Heart left ventricle (tissue), 16 donors: ENCODE measurements at regions of chrX and their contacts with region 1.

Region 1: GRCh38 chrX:68249401-68249831 is 183.9 kb downstream of the OPHN1 start:
- DNase-seq: peak; percentile 30 to 64 (median 44)
- ATAC-seq: peak; percentile 83 to 93 (median 90)
- H3K4me3 ChIP-seq: no peak overlapping the region
- H3K27ac ChIP-seq: peak overlapping the region in 3 of 12 donors; percentile 0 to 17 (median 17)
- H3K4me1 ChIP-seq: peaks cover 0 to 14% (median 0%) of the 10 kb centered on the region in 12 donors
- H3K27me3 ChIP-seq: no peaks in the 10 kb centered on the region
- CTCF ChIP-seq: no peak
- POLR2A ChIP-seq: no peak

Region 2: GRCh38 chrX:68307769-68308168 is 58.4 kb after region 1 on chrX:
- intact Hi-C with region 1: no loop called
- DNase-seq: no peak
- ATAC-seq: peak in 1 of 4 donors; percentile 51
- H3K4me3 ChIP-seq: no peak overlapping the region
- H3K27ac ChIP-seq: no peak overlapping the region
- H3K4me1 ChIP-seq: no peaks in the 10 kb centered on the region
- H3K27me3 ChIP-seq: peaks cover 0 to 5% (median 0%) of the 10 kb centered on the region in 9 donors
- CTCF ChIP-seq: no peak
- POLR2A ChIP-seq: no peak

Region 3: DNA sequence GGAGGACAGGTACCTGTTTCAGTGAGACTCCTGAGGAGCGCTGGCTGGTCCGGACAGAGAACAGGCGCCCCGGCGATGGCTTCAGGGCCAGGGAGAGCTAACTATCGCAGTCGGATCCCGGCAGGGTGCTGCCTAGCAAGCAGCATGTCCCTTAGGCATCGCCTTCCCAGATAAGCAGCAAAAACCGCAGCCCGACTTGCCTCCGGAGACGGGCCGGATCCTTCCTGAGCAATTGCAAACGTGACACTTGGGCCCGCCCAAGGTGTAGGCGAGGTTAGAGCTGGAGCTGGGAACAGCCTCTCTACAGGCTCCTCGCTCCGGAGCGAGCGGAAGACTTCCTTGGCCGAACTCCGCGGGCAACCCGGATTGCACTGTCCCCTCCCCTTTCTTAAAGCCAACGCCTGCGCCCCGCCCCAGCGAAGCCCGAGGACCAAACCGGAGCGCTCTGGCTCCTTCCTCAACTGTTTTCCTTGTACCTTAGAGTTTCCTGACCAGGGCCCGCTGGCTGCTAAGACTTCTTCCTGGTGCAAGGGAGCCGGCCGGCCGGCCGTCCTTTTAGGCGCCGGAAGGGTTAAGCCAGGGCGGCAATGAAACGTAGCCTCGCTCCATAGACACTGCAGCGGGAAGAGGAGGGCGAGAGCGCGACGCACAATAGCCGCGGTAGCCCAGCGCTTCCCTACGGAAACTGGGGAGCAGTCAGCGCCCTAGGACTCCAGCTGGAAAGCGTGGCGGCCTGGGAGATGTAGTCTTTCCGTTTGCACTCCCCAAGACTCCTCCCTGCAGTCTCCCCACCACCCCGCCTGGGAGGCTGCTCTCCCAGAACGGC is 184.0 kb after region 1 on chrX and contains the start of gene OPHN1:
- intact Hi-C with region 1: loop called in 1 of 10 experiments (anchors 10 kb)
- DNase-seq: peak; percentile 74 to 86 (median 81)
- ATAC-seq: peak; percentile 90 to 95 (median 94)
- H3K4me3 ChIP-seq: peak within 1 kb of the TSS; percentile 53 to 90 (median 70)
- H3K27ac ChIP-seq: peak within 1 kb of the TSS; percentile 72 to 94 (median 86)
- H3K4me1 ChIP-seq: peaks cover 0 to 9% (median 0%) of the 10 kb centered on the region in 12 donors
- H3K27me3 ChIP-seq: peaks cover 0 to 18% (median 0%) of the 10 kb centered on the region in 9 donors
- CTCF ChIP-seq: no peak
- POLR2A ChIP-seq: peak in 1 of 2 donors; percentile 36
- total RNA-seq, gene OPHN1: 3.3 to 6.9 (median 5.7) TPM